Activated naive CD4-positive, alpha-beta T cell treated with anti-CD3 and anti-CD28 coated beads, Interleukin-2, amount 10 ng/mL, durations not matched to agents 7 days and 5 days (primary cell): ENCODE measurements at regions of chr17 and their contacts with region 1.

Region 1: GRCh38 chr17:59435238-59435637 is 103.8 kb downstream of the YPEL2 start:
- DNase-seq: no peak
- H3K4me3 Mint-ChIP-seq: no peak overlapping the region
- H3K27ac Mint-ChIP-seq: no peak overlapping the region
- H3K4me1 Mint-ChIP-seq: peaks cover 38% of the 10 kb centered on the region
- H3K27me3 Mint-ChIP-seq: peaks cover 9% of the 10 kb centered on the region

Region 2: DNA sequence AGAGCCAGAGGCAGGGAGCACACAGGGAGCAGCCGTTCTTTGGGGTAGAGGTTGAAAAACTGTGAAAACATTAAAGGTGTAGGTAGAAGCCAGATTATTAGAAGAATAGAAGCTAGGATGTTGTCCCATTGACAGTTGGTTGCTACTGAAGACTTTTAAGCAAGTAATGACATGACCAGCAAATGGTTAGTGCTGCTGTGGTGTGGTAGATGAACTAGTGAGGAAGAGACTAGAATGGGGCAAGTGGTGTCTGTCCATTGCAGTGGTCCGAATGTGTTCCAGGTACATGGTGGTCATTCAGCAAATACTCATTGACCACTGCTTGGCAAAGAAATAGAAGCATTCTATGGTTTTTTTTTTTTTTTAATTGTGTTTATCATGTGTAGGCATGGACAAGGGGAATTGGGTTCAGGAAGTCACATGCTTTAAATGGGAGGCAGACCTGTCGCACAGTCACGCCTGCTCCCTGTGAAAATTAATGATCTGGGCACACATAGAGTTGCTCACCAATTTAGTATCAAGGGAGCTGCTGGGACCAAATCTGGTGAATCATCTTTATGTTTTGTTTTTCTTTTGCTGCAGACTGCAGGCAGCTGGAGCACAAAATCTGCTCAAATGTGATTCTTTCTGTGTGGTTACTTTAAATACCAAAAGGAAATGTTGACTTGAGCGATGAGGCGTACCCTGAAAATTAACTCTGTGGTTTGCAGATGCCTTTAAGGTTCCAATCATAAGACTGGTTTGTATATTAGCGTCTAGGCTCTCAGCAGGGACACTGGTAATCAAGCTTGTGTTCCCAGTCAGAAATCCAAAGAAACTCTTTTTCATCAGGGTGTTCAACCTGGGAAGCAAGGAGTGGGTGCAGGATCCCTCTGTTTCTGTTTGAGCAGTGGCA is 73.1 kb before region 1 on chr17:
- CTCF ChIA-PET with region 1: interaction called, 10 read pairs
- DNase-seq: peak; percentile 57
- H3K4me3 Mint-ChIP-seq: peak overlapping the region; percentile 74
- H3K27ac Mint-ChIP-seq: peak overlapping the region; percentile 95
- H3K4me1 Mint-ChIP-seq: peaks cover 85% of the 10 kb centered on the region
- H3K27me3 Mint-ChIP-seq: no peaks in the 10 kb centered on the region